MCF 10A (cell line): ENCODE measurements at regions of chr2 and their contacts with region 1.

Region 1: GRCh38 chr2:83196225-83196624 is 1262.9 kb downstream of the SUCLG1 start:
- DNase-seq: peak; percentile 58
- H3K4me3 Mint-ChIP-seq: no peak overlapping the region
- H3K27ac Mint-ChIP-seq: no peak overlapping the region
- H3K4me1 Mint-ChIP-seq: peaks cover 7% of the 10 kb centered on the region
- H3K27me3 Mint-ChIP-seq: no peaks in the 10 kb centered on the region
- CTCF ChIP-seq: peak; percentile 65

Region 2: DNA sequence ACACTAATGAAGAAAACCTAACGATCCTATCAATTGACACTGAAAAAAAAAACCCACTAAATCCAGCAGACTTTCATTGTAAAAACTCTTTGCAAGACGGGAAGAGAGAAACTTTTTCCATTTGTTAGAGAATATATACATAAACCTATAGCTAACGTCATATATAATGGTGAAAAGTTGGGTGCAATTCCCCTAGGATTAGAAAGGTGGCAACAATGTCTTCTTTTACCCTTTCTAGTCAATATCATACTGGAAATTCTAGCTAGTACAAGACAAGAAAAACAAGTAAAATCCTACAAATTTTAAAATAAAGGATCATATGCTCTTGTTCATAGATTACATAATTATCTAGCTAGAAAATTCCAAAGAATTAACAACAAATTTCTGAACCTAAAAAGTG is 1295.2 kb before region 1 on chr2:
- CTCF ChIA-PET with region 1: no interaction called
- POLR2A ChIA-PET with region 1: no interaction called
- intact Hi-C with region 1: loop called (anchors 1 kb)
- DNase-seq: peak; percentile 38
- H3K4me3 Mint-ChIP-seq: no peak overlapping the region
- H3K27ac Mint-ChIP-seq: no peak overlapping the region
- H3K4me1 Mint-ChIP-seq: no peaks in the 10 kb centered on the region
- H3K27me3 Mint-ChIP-seq: no peaks in the 10 kb centered on the region
- CTCF ChIP-seq: peak; percentile 27